ENCODE measurements at regions of chr2 and their contacts with region 1.

Region 1: DNA sequence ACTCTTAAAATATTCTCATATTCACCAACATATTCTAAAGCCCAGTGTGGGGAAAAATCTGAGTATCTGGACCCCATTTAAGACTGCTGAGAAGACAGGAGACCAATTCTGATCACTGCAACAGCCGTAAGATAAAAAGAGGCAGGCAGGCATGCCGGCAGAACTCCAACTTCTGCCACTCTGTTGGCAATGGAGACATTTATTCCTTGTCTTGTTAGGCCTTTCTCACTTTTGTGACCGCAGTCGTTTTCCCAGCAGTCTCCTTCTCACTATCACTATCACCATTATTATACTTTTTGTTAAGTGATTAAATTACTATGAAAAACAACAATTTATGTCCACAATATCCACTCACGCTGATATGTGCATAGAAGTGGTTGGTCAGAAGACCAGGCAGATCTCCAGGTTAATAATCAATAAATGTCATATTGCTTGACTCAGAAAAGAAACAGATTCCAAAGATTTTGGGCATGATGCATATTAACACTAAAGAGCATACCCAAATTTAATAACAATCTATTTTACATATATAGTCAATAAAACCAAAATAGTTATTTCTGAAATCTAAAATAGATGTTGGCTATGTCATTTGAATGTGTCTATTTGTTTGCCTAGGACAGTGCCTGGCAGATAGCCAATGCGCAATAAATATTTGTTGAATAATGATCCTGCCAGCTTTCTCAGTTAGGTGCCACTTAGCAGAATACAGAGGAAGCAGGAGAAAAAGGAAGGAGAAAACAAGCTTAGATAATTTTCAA is 38.2 kb downstream of the SESTD1 start:
- DNase-seq: no peak
- H3K4me3 ChIP-seq: no peak overlapping the region
- H3K27ac ChIP-seq: no peak overlapping the region
- H3K4me1 ChIP-seq: peaks cover 0 to 56% (median 26%) of the 10 kb centered on the region in 4 donors
- H3K27me3 ChIP-seq: no peaks in the 10 kb centered on the region
- CTCF ChIP-seq: no peak
- EP300 ChIP-seq: no peak
- POLR2A ChIP-seq: no peak

Region 2: DNA sequence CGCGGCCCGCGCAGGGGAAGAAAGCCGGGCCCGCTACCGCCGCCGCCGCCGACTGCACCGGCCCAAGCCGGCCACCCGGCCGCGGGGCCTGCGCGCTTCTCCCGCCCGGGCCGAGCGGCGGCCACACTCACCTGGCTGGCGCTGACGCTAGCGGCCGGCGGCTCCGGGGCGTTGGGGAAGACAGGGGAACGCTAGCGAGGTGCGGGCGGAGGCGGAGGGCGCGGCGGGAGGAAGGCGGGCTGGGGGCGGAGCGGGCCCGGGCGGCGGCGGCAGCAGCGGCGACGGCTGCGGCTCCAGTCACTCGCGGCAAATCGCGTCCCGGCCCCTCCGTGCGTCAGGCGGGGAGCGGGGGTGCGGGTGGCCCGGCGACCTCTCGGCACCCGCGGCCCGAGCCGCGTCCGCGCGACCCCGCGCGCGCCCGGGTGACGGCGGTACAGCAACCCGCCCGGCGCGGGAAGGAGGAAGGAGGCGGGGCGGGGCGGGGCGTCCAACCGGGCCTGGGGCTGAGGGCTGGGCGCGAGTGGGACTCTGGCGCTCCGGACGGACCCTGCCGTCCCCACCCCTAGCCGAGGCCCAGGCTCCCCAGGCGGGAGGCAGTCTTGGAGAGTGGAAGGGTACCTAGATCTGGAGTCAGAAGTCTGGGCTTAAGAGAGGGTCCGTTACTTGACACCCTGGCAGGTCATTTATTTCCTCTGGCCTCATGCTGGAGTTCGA is 38.1 kb after region 1 on chr2 and contains the start of gene SESTD1:
- intact Hi-C with region 1: loop called (anchors 2 kb)
- DNase-seq: peak; percentile 85
- H3K4me3 ChIP-seq: peak within 1 kb of the TSS; percentile 64 to 81 (median 78)
- H3K27ac ChIP-seq: peak within 1 kb of the TSS; percentile 87 to 91 (median 90)
- H3K4me1 ChIP-seq: peaks cover 0 to 33% (median 22%) of the 10 kb centered on the region in 4 donors
- H3K27me3 ChIP-seq: no peaks in the 10 kb centered on the region
- CTCF ChIP-seq: no peak
- EP300 ChIP-seq: no peak
- POLR2A ChIP-seq: no peak
- total RNA-seq, gene SESTD1: 31.0 to 52.3 (median 41.0) TPM

Region 3: GRCh38 chr2:179410552-179411356 is 184.4 kb after region 1 on chr2:
- intact Hi-C with region 1: loop called (anchors 10 kb)
- DNase-seq: peak; percentile 67
- H3K4me3 ChIP-seq: no peak overlapping the region
- H3K27ac ChIP-seq: no peak overlapping the region
- H3K4me1 ChIP-seq: no peaks in the 10 kb centered on the region
- H3K27me3 ChIP-seq: no peaks in the 10 kb centered on the region
- CTCF ChIP-seq: peak in 3 of 4 experiments; percentile 34 to 61 (median 35)
- EP300 ChIP-seq: no peak
- POLR2A ChIP-seq: no peak

Region 4: DNA sequence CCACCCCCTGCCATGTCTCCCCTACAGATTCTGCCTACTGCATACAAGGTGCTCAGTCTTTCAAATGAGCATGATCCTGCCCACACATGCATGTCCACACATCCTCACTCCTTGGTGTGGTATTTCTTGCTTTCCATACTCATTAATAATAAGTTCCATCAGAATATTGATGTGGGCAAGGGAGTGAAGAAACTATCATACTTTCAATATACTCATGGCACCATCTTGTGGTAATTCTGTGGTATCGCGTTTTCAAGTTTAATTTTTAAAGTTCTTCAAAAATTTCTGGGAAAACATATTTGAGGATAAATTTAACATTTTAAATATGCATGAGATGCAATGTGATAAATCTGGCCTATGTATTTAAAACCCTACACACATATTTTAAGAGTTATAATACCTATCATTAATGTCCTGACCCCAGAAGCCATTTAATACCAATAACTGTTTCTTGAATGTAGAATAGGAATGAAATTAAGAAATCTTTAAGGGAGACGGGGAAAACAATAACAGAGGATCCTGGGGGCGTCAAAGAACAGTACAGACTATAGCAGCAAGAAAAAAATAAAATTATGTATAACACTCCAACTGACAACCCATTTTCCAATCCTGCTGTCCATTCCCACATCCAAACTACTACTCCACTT is 524.9 kb after region 1 on chr2:
- intact Hi-C with region 1: loop called (anchors 10 kb)
- DNase-seq: no peak
- H3K4me3 ChIP-seq: no peak overlapping the region
- H3K27ac ChIP-seq: no peak overlapping the region
- H3K4me1 ChIP-seq: peaks cover 0 to 10% (median 0%) of the 10 kb centered on the region in 4 donors
- H3K27me3 ChIP-seq: no peaks in the 10 kb centered on the region
- CTCF ChIP-seq: peak in 3 of 4 experiments; percentile 40 to 61 (median 40)
- EP300 ChIP-seq: no peak
- POLR2A ChIP-seq: no peak